ENCODE measurements at regions of chr22 and their contacts with region 1.

Region 1: DNA sequence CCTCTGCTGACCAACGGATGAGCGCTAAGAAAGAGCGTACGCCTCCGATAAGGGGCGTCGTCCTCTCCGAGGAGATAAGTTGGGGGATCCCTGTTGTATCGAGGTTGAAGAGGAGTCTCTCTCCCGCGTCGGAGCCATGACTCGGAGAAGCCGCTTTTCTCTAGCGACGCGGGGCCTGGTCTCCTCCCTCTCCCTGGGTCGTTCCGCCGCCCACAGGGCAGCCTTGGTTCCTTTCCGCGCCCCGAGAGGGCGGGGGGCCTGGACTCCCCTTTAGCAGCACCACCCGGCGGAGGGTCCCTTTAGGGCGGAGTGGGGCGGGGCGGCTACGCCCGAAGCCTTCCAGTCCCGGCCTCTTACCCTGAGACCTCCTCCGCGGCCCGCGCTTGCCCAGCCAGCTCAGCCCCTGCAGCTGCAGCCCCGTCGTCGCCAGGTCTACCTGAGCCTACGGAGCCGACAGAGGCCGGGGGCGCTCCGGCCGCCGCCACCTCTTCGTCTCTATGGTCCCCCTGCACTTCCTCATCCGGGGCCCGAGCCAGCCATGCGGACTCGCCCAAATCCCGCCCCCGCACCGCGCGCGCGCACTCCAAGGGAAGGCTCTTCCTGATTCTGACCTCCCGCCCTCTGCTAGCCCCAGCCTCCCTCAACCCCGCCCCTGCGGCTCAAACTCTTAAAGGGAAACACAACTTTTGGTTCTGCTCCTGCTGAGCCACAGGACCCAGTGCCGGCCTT is at the start of gene PRR14L:
- DNase-seq: peak; percentile 77
- H3K4me3 ChIP-seq: peak within 1 kb of the TSS; percentile 67
- CTCF ChIP-seq: peak; percentile 6

Region 2: GRCh38 chr22:31680861-31681341 is 68.9 kb before region 1 on chr22:
- in situ Hi-C with region 1: loop called (anchors 10 kb)
- DNase-seq: peak; percentile 66
- H3K4me3 ChIP-seq: no peak overlapping the region
- CTCF ChIP-seq: no peak

Region 3: DNA sequence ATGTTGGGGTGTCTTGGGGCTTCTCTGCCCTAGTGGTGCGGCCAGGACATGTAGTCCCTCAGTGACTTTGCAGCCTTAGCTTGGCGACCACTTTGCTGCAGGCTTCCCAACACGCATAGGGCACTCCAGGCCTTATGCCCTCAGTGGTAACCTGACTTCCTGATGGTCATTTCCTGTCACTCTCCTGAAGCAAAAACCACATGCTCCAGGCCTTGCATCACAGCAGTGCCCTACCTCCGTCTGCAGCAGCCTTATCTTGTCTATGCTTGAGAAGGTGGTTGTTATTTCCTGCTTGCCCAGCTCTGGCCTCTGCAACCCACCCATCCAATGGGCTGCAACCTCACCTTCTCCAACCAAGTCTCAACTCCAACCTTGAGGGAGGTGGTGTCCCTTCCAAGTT is 54.4 kb before region 1 on chr22:
- in situ Hi-C with region 1: no loop called
- DNase-seq: no peak
- H3K4me3 ChIP-seq: no peak overlapping the region
- CTCF ChIP-seq: no peak

Region 4: GRCh38 chr22:31872209-31872608 is 122.4 kb after region 1 on chr22:
- in situ Hi-C with region 1: no loop called
- DNase-seq: no peak
- H3K4me3 ChIP-seq: no peak overlapping the region
- CTCF ChIP-seq: no peak